Gastrocnemius medialis (tissue), 4 donors: ENCODE measurements at regions of chr22 and their contacts with region 1.

Region 1: DNA sequence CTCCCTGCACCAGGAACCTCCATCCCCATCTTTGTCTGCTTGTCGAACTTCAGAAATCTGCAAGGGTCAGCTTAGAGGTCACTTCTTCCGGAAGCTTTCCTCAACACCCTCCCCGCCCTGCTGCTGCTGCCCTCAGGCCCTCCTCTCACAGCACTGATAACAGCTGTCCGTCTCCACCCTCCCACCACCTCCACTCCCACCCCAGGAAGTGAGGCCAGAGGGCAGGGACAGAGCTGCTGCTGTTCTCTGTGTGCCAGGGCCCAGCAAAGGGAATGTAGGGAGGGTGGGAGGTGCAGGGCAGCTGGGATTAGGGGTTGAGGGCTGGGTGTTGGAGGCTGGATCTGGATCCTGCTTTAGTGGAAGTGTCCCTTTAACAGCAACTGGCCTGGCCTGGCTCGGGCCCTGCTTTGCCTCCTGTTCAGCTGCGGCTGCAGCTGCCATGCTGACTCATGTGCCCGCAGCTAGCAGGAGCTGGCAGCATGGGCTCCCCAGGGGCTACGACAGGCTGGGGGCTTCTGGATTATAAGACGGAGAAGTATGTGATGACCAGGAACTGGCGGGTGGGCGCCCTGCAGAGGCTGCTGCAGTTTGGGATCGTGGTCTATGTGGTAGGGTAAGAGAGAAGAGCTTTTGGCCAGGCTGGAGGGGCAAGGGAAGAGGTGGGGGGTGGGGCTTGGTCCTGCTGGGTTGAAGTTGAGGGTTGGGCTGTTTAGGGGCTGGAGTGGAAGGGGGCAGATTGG is at the start of gene P2RX6:
- DNase-seq: peak; percentile 47 to 82
- ATAC-seq: peak; percentile 81 to 83
- H3K4me3 ChIP-seq: peak within 1 kb of the TSS; percentile 56 to 81 (median 73)
- H3K27ac ChIP-seq: peak within 1 kb of the TSS; percentile 90 to 96 (median 94)
- H3K4me1 ChIP-seq: peaks cover 12 to 26% of the 10 kb centered on the region in 2 donors
- H3K27me3 ChIP-seq: no peaks in the 10 kb centered on the region
- CTCF ChIP-seq: no peak
- POLR2A ChIP-seq: peak; percentile 52 to 70
- total RNA-seq, gene P2RX6: 17.6 to 68.9 (median 33.3) TPM

Region 2: GRCh38 chr22:20881231-20881630 is 133.7 kb before region 1 on chr22:
- in situ Hi-C with region 1: no loop called
- intact Hi-C with region 1: no loop called
- DNase-seq: no peak
- ATAC-seq: no peak
- H3K4me3 ChIP-seq: no peak overlapping the region
- H3K27ac ChIP-seq: no peak overlapping the region
- H3K4me1 ChIP-seq: no peaks in the 10 kb centered on the region
- H3K27me3 ChIP-seq: no peaks in the 10 kb centered on the region
- CTCF ChIP-seq: no peak
- POLR2A ChIP-seq: no peak

Region 3: DNA sequence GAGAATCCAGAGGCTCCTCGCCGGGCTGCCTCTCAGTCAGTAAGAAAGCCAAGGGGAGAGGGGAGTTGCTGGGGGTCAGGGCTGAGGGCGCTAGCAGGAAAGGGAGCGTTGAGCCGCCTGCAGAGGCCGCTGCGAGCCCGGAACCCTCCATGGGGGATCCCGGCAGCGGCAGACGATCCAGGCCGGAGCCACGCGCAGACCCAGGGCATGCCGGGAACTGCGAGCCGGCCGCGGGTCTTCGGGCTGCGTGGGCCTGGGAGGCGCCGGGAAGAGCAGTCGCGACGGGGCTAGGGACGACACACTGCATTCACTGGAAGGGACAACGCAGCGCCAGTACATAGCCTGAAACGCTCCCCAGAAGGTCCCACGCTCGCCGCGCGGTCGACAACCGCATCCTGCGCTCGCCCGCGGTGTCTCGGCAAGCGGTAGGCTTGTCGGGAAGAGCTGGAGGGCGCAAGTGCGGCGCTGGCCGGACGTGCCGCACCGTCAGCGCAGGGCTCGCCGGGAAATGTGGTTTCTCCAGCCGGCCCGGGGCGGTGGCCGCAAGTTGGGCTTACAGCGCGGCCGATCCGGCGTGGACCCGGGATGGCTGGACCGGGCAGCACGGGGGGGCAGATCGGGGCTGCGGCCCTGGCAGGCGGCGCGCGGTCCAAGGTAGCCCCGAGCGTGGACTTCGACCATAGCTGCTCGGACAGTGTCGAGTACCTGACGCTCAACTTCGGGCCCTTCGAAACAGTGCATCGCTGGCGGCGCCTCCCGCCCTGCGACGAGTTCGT is 32.9 kb before region 1 on chr22 and contains the start of gene LZTR1:
- in situ Hi-C with region 1: no loop called
- intact Hi-C with region 1: loop called (anchors 5 kb)
- DNase-seq: peak; percentile 73 to 75
- ATAC-seq: peak; percentile 93 to 95
- H3K4me3 ChIP-seq: peak within 1 kb of the TSS; percentile 80 to 97 (median 89)
- H3K27ac ChIP-seq: peak within 1 kb of the TSS; percentile 91 to 94 (median 93)
- H3K4me1 ChIP-seq: peaks cover 24 to 33% of the 10 kb centered on the region in 2 donors
- H3K27me3 ChIP-seq: no peaks in the 10 kb centered on the region
- CTCF ChIP-seq: peak; percentile 34 to 78 (median 71)
- POLR2A ChIP-seq: peak; percentile 93 to 94
- total RNA-seq, gene LZTR1: 25.4 to 36.4 (median 26.3) TPM

Region 4: GRCh38 chr22:21031971-21032867 is 17.3 kb after region 1 on chr22 and contains the start of gene SLC7A4:
- in situ Hi-C with region 1: no loop called
- intact Hi-C with region 1: no loop called
- DNase-seq: peak in 1 of 2 donors; percentile 35
- ATAC-seq: peak; percentile 15
- H3K4me3 ChIP-seq: peak within 1 kb of the TSS in 3 of 4 donors; percentile 24 to 44 (median 28)
- H3K27ac ChIP-seq: no peak within 1 kb of the TSS
- H3K4me1 ChIP-seq: peaks cover 7 to 14% of the 10 kb centered on the region in 2 donors
- H3K27me3 ChIP-seq: peaks cover 17 to 20% (median 19%) of the 10 kb centered on the region in 3 donors
- CTCF ChIP-seq: no peak
- POLR2A ChIP-seq: peak in 1 of 2 donors; percentile 25
- total RNA-seq, gene SLC7A4: not detected

Region 5: DNA sequence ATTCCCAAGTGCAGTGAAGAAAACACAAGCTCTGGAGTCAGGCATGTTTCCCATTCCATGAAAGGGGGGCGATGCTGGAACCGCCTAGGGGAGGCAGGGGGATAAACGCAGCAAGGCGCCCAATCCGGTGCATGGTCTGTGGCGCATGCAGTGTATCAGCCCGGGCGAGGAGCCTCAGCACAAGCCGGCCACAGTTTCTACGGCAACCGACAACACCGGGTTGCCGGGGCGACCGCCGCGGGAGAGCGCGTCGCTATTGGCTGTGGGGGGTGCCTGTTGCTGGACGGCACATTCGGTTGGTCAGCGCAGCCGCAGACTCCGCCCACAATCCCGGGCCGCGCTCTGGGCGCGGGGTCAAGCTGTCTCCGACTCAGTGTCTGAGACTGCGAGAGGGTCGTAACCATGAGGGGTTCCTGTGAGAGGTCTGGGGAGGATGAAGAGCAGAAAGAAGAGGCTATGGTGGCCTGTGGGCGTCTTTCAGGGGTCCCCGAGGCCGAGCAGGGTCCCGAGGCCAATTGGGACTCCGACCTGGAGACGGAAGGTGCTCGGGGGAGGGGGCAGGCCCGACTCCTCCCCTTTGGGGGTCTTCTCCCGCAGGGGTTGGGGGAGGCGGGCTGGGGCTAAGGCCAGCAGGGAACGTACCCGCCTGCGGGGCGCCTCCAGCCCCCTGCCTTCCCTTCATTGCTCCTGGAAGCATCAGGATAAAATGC is 30.8 kb after region 1 on chr22 and contains the start of gene LRRC74B:
- in situ Hi-C with region 1: no loop called
- intact Hi-C with region 1: loop called (anchors 1 kb)
- DNase-seq: peak; percentile 81 to 88
- ATAC-seq: peak; percentile 77 to 82
- H3K4me3 ChIP-seq: peak within 1 kb of the TSS; percentile 55 to 78 (median 69)
- H3K27ac ChIP-seq: peak within 1 kb of the TSS; percentile 71 to 91 (median 89)
- H3K4me1 ChIP-seq: peaks cover 23 to 24% of the 10 kb centered on the region in 2 donors
- H3K27me3 ChIP-seq: no peaks in the 10 kb centered on the region
- CTCF ChIP-seq: no peak
- POLR2A ChIP-seq: no peak
- total RNA-seq, gene LRRC74B: not detected

Region 6: GRCh38 chr22:21641789-21642583 is 627.1 kb after region 1 on chr22 and contains the start of gene SDF2L1:
- in situ Hi-C with region 1: no loop called
- intact Hi-C with region 1: loop called (anchors 5 kb)
- DNase-seq: peak; percentile 98 to 99
- ATAC-seq: peak; percentile 97 to 98
- H3K4me3 ChIP-seq: peak within 1 kb of the TSS; percentile 73 to 97 (median 83)
- H3K27ac ChIP-seq: peak within 1 kb of the TSS; percentile 72 to 80 (median 74)
- H3K4me1 ChIP-seq: peaks cover 0 to 7% of the 10 kb centered on the region in 2 donors
- H3K27me3 ChIP-seq: no peaks in the 10 kb centered on the region
- CTCF ChIP-seq: peak in 1 of 5 experiments; percentile 41
- POLR2A ChIP-seq: peak; percentile 76 to 81
- total RNA-seq, gene SDF2L1: 8.5 to 33.2 (median 23.3) TPM